Right cardiac atrium (tissue), 5 donors: ENCODE measurements at regions of chr20 and their contacts with region 1.

Region 1: DNA sequence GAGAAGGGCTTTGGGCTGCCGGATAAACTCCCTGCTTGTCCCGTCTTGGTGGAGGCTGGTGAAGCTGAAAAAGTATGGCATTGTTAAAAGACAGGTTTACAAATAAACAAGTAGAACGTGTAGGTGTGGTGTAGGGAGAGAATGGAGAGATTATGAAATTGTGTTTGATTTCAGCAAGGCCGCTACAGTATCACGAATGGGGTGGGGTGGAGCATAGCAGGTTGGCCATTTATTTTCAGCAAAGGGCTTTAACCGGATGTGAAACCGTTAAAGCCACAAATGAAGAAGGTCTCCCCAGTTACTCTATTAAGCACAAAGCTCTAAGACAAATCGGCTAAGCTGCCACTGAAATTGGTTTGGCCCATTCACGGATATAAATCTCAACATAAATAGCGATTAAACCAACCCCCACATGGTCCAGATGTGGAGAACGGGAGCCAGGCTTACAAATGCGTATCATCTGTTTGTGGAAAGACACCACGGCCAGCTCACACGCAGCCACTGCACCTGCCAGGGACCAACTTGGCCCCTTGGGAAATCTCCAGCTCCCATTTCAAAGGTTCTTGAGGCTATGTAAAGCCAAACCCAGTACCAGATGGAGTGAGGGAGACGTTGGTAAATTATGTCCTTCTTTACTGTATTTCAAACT is 94.0 kb downstream of the ZMYND8 start:
- DNase-seq: no peak
- ATAC-seq: no peak
- H3K4me3 ChIP-seq: no peak overlapping the region
- H3K27ac ChIP-seq: no peak overlapping the region
- H3K4me1 ChIP-seq: peaks cover 13% of the 10 kb centered on the region
- H3K27me3 ChIP-seq: no peaks in the 10 kb centered on the region

Region 2: GRCh38 chr20:47205577-47206498 is 56.7 kb before region 1 on chr20:
- intact Hi-C with region 1: loop called in 2 of 4 experiments (anchors 10 kb)
- DNase-seq: peak; percentile 71 to 92 (median 89)
- ATAC-seq: peak; percentile 75
- H3K4me3 ChIP-seq: no peak overlapping the region
- H3K27ac ChIP-seq: no peak overlapping the region
- H3K4me1 ChIP-seq: peaks cover 3% of the 10 kb centered on the region
- H3K27me3 ChIP-seq: no peaks in the 10 kb centered on the region

Region 3: DNA sequence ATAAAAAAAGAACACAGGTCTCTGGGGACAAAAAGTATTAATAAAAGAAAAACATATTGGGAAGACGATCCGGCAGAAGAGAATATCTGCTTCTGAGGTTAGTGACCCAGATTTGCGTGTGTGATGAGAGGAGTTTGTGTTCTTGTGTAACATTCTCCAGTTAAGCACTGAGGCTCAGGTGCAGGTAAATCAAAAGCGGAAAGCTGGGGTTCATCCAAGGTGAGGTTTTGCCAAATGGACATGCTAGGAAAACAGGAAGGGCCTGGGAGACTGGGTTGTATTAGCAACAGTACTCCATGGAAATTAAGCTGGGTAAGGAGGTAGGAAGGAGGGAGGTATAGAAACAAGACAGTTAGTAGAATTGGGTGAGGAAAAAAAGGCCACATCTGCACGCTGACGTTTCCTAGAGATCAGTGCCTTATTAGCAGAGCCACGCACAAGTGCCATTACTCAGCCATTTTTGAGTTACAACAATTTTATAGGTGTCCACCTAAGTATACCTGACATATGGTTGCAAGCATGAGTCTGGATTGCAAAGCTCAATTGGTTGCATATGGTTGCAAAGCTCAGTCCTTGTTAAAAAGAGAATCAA is 45.6 kb before region 1 on chr20:
- intact Hi-C with region 1: loop called in 1 of 4 experiments (anchors 10 kb)
- DNase-seq: peak in 1 of 3 donors; percentile 3
- ATAC-seq: no peak
- H3K4me3 ChIP-seq: no peak overlapping the region
- H3K27ac ChIP-seq: no peak overlapping the region
- H3K4me1 ChIP-seq: peaks cover 2% of the 10 kb centered on the region
- H3K27me3 ChIP-seq: no peaks in the 10 kb centered on the region